GM12878 (cell line): ENCODE measurements at regions of chr4 and their contacts with region 1.

Region 1: DNA sequence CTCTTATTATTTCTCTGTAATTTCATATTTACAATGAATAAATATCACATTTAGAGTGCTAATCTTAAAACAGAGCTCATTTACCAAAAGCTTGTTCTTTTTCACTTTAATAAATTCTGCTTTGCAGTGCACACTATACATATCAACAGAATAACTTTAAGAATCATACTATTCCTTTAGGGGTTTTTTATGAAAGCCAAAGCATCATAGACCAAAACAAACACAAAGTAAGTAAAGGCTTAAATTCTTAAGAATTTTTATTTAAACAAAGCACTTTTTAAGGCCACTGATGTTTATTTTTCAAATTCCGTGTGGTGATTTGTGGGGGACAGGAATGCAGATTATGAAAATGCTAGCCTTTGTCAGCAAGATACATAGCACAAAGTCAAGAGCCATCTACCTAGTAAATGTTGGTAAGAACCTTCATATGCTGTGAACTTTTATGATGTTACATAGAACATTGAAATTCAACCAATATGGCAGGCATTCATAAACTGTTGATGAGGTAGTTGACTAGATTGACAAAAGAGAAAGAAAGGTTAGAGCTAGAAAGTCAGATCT is 17.8 kb downstream of the TIGD2 start:
- DNase-seq: no peak
- ATAC-seq: no peak
- H3K4me3 ChIP-seq: no peak overlapping the region
- H3K27ac ChIP-seq: no peak overlapping the region
- H3K4me1 ChIP-seq: no peaks in the 10 kb centered on the region
- H3K27me3 ChIP-seq: no peaks in the 10 kb centered on the region; a peak in 1 of 4 replicates
- CTCF ChIP-seq: no peak
- EP300 ChIP-seq: no peak
- POLR2A ChIP-seq: no peak
- RAD21 ChIP-seq: no peak

Region 2: DNA sequence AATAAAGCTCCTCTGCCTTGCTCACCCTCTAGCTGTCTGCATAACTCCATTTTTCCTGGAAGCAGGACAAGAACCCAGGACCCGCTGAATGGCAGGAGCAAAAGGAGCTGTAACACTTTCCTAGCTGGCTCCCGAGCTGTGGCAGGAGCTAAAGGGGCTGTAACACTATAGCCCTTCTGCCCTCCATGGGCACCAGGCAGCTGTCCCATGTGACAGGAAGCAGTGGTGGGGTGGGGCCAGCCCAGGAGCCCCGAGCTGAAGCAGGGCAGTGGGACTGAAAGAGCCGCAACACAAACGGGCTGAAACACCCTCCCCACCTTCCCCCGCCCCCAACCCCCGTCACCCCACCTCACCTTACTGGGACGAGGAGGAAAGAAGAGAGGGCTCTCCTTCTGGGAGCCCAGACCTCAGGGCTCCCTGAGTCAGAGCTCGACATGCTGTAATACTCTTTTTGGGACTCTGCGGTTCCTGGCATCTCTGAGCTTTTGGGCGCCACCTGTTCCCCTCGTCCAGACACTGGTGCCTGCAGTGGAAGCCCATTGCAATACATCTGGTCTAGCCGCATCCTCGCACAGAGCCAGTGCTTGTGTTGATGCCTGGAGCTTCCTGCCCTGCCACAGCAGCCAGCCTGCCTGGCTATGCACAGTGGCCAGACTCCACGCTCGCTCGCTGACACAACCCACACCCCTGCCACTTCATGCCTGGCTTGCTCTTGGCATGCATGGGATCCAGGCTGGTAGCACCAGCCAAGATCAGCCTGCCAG is 884.2 kb before region 1 on chr4:
- CTCF ChIA-PET with region 1: no interaction called
- POLR2A ChIA-PET with region 1: no interaction called
- RAD21 ChIA-PET with region 1: no interaction called
- SMC1A ChIA-PET with region 1: no interaction called
- in situ Hi-C with region 1: no loop called
- intact Hi-C with region 1: no loop called
- DNase-seq: no peak
- ATAC-seq: peak; percentile 41; the same call in 1 of the 3 replicates
- H3K4me3 ChIP-seq: no peak overlapping the region
- H3K27ac ChIP-seq: no peak overlapping the region
- H3K4me1 ChIP-seq: no peaks in the 10 kb centered on the region
- H3K27me3 ChIP-seq: no peaks in the 10 kb centered on the region
- CTCF ChIP-seq: no peak
- EP300 ChIP-seq: no peak
- POLR2A ChIP-seq: peak; percentile 26; the same call in 1 of the 2 replicates
- RAD21 ChIP-seq: no peak

Region 3: GRCh38 chr4:89009115-89009514 is 120.0 kb before region 1 on chr4:
- CTCF ChIA-PET with region 1: no interaction called
- POLR2A ChIA-PET with region 1: no interaction called
- RAD21 ChIA-PET with region 1: no interaction called
- SMC1A ChIA-PET with region 1: no interaction called
- in situ Hi-C with region 1: no loop called
- intact Hi-C with region 1: no loop called
- DNase-seq: no peak
- ATAC-seq: no peak
- H3K4me3 ChIP-seq: no peak overlapping the region
- H3K27ac ChIP-seq: no peak overlapping the region
- H3K4me1 ChIP-seq: no peaks in the 10 kb centered on the region
- H3K27me3 ChIP-seq: no peaks in the 10 kb centered on the region
- CTCF ChIP-seq: no peak
- EP300 ChIP-seq: no peak
- POLR2A ChIP-seq: no peak
- RAD21 ChIP-seq: no peak

Region 4: GRCh38 chr4:89105726-89106125 is 23.4 kb before region 1 on chr4:
- CTCF ChIA-PET with region 1: no interaction called
- POLR2A ChIA-PET with region 1: no interaction called
- RAD21 ChIA-PET with region 1: no interaction called
- SMC1A ChIA-PET with region 1: no interaction called
- in situ Hi-C with region 1: no loop called
- intact Hi-C with region 1: no loop called
- DNase-seq: no peak
- ATAC-seq: no peak
- H3K4me3 ChIP-seq: no peak overlapping the region
- H3K27ac ChIP-seq: no peak overlapping the region
- H3K4me1 ChIP-seq: peaks cover 7% of the 10 kb centered on the region
- H3K27me3 ChIP-seq: no peaks in the 10 kb centered on the region
- CTCF ChIP-seq: no peak
- EP300 ChIP-seq: no peak
- POLR2A ChIP-seq: no peak
- RAD21 ChIP-seq: no peak

Region 5: DNA sequence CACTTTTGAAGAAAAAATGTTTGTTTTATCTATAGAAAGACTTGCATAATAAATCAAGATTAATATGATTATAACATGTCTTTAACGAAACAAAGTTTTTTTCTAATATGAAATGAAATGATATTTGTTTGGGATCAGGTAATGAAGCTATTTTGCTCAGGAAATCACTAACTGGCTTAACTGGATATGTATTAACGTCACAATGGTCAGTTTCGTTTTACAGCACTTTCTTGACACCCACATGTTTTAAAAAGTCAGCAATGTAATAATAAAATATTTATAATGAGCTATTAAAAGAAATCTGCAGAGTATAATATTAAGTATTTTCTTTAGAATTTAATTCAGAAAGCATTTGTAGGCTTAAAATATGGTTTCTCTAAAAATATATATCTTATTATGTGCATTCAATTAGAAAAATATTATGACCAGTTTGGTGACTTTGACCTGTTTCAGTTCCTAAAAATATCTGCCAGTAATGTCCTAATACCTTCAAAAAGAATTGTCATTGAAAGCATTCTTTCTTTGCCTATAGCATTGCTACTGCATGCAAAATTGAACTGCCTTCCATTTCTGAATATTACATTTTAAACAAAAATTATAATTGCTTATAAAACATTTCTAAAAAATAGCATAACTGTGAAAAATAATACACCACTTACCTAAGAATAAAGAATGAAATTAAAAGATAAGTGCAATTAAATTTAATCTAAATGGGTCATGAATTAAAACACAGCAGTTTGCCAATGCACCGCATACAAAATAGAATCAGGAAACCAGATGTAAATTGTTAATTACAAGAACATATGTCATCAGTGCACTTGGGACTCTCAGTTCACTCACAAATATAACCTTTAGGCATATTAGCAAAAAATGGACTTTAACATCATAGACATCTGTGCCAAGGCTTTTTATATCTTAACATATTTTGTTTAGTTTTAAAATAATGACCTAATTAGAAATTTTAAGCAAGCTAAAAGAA is 13.8 kb after region 1 on chr4:
- CTCF ChIA-PET with region 1: interaction called, 7 read pairs
- POLR2A ChIA-PET with region 1: interaction called, 5 read pairs
- RAD21 ChIA-PET with region 1: interaction called, 5 read pairs
- SMC1A ChIA-PET with region 1: interaction called, 14 read pairs
- in situ Hi-C with region 1: no loop called
- intact Hi-C with region 1: no loop called
- DNase-seq: no peak
- ATAC-seq: peak; percentile 93
- H3K4me3 ChIP-seq: no peak overlapping the region
- H3K27ac ChIP-seq: no peak overlapping the region
- H3K4me1 ChIP-seq: no peaks in the 10 kb centered on the region
- H3K27me3 ChIP-seq: no peaks in the 10 kb centered on the region
- CTCF ChIP-seq: no peak
- EP300 ChIP-seq: peak; percentile 41 to 63; a peak in 2 of 4 replicates
- POLR2A ChIP-seq: no peak
- RAD21 ChIP-seq: no peak